PC-3 (cell line): ENCODE measurements at regions of chr2 and their contacts with region 1.

Region 1: GRCh38 chr2:44715671-44716081 is 225.8 kb upstream of the SIX3 start:
- DNase-seq: peak; percentile 72
- ATAC-seq: peak; percentile 87
- H3K4me3 ChIP-seq: no peak overlapping the region
- H3K27ac ChIP-seq: no peak overlapping the region
- H3K4me1 ChIP-seq: no peaks in the 10 kb centered on the region
- H3K27me3 ChIP-seq: no peaks in the 10 kb centered on the region
- CTCF ChIP-seq: peak; percentile 82

Region 2: DNA sequence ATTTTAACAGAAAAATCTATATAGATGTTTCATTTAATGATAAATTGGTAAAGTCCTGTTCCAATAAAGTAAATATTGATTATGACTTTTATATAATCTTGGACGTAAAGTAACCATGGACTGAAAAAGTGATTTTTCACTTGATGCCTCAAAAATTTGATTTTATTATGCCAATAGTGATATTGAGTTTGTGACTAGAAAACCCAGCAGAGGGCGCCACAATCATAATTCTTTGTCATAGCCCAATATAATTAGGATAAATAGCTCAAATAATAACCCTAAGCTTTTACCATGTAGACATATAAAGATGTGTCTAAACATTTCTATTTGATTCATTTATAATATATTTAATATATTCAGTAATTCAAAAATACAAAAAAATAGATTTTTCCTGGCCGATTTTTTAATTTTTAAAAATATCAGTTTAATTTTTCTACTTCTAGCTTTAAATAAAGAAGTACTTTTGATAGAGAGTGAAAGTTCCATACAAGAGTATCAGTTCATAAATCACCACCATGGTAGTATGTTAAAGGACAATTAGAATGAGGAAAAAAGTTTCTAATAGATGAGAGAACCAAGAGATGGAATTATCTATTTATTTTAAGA is 323.2 kb before region 1 on chr2:
- CTCF ChIA-PET with region 1: no interaction called
- POLR2A ChIA-PET with region 1: no interaction called
- intact Hi-C with region 1: loop called (anchors 1 kb)
- DNase-seq: peak; percentile 73
- ATAC-seq: no peak
- H3K4me3 ChIP-seq: no peak overlapping the region
- H3K27ac ChIP-seq: no peak overlapping the region
- H3K4me1 ChIP-seq: no peaks in the 10 kb centered on the region
- H3K27me3 ChIP-seq: no peaks in the 10 kb centered on the region
- CTCF ChIP-seq: peak; percentile 72

Region 3: DNA sequence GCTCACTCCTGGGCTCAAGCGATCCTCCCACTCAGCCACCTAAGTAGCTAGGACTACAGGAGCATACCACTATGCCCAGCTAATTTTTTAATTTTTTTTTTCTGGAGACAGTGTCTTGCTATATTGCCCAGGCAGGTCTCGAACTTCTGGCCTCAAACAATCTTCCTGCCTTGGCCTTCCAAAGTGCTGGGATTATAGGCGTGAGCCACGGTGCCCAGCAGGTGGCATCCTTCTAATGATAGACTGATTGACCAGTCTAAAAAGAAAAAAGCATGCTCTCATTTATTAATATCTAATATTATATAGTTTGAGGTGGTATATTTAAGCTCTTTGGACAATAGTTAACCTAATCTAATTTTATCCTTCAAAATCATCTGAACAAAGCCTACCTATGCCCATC is 155.3 kb before region 1 on chr2:
- CTCF ChIA-PET with region 1: interaction called, 3 read pairs
- POLR2A ChIA-PET with region 1: interaction called, 5 read pairs
- intact Hi-C with region 1: loop called (anchors 1 kb)
- DNase-seq: peak; percentile 58
- ATAC-seq: no peak
- H3K4me3 ChIP-seq: no peak overlapping the region
- H3K27ac ChIP-seq: no peak overlapping the region
- H3K4me1 ChIP-seq: peaks cover 10% of the 10 kb centered on the region
- H3K27me3 ChIP-seq: no peaks in the 10 kb centered on the region
- CTCF ChIP-seq: peak; percentile 67